Left cardiac atrium (tissue), 4 donors: ENCODE measurements at regions of chr1 and their contacts with region 1.

Region 1: GRCh38 chr1:154884869-154885701 is 15.0 kb upstream of the KCNN3 start:
- DNase-seq: no peak
- ATAC-seq: no peak

Region 2: DNA sequence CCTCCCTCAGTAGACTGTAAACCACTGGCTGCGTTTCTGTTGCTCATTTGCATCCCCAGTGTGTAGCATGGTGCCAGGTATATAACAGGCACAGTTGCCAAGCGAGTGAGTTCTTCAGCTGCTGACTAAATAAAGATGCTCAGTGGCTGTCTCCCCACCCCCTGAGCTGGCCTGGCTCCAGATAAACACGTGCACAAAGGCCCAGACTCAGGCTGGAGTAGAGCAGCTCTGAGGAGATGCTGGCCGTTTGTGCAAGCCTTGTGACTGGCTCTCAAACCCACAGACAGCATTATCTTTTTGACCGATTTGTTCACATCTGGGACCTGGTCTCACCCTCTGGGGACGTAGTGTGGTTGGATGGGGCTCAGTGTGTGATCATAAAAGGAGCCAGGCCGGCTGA is 310.4 kb before region 1 on chr1:
- intact Hi-C with region 1: loop called in 1 of 2 experiments (anchors 10 kb)
- DNase-seq: no peak
- ATAC-seq: no peak

Region 3: GRCh38 chr1:154784924-154785531 is 100.1 kb before region 1 on chr1:
- intact Hi-C with region 1: no loop called
- DNase-seq: peak; percentile 61
- ATAC-seq: peak; percentile 67 to 70

Region 4: DNA sequence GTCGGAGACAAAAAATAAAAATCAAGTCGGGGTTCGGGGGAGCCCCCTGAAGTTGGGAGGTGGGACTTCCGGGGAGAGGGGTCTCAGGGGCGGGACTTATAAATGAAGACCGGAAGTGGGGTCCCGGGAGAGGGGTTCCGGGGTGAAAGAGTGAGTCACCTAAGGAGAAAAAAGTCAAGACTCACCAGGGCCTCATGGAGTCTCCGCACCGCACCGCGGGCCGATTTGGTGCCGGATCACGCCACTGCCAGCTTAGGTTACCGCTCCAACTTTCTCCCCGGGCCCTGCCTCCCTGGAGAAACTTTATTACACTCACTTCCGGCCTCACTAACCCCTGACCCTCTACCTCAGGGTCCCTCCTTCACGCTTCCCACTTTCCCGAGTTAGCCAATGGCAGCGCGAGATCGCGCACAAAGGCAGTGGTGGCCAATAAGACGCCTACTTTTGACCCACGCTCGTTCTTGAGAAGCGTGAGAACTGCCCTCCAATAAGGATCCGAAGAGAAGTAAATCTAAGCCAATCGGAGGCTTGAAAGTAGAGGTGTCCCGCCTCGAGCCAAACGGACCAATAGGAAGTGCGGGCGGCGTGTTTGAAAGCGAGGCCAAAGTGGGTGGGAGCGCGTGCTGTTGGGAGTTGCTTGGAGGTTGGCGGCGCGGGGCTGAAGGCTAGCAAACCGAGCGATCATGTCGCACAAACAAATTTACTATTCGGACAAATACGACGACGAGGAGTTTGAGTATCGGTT is 89.2 kb after region 1 on chr1 and contains the start of gene CKS1B:
- intact Hi-C with region 1: no loop called
- DNase-seq: peak; percentile 97
- ATAC-seq: peak; percentile 86 to 90
- total RNA-seq, gene CKS1B: 26.9 to 33.8 TPM

Region 5: GRCh38 chr1:155193275-155193990 is 308.3 kb after region 1 on chr1:
- intact Hi-C with region 1: no loop called
- DNase-seq: peak; percentile 94
- ATAC-seq: peak; percentile 86 to 87